ENCODE measurements at regions of chr1 and their contacts with region 1.

Region 1: DNA sequence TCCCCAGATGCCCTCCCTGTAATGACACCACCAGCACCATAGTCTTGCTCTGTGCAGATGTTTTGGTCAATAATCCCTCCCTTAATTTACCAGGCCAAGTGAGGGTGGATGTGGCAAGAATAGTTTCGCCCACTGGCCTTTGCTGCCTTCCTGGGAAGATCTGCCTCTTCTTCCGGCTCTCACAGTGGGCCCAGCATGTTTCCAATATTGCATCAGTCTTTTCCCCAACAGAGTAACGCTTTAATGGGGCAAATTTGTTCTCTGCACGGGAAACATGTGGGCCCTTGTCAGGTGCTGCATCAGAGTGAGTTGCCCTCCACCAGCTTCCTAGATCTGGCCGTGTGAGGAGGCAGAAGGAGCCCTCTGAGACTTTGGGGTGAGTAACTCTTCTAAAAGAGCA is 12.0 kb upstream of the ALX3 start:
- DNase-seq: no peak
- H3K4me3 ChIP-seq: no peak overlapping the region
- H3K27ac ChIP-seq: no peak overlapping the region
- H3K4me1 ChIP-seq: peaks cover 6% of the 10 kb centered on the region
- H3K27me3 ChIP-seq: peaks cover 60 to 62% of the 10 kb centered on the region in 2 experiments
- CTCF ChIP-seq: no peak
- POLR2A ChIP-seq: no peak

Region 2: DNA sequence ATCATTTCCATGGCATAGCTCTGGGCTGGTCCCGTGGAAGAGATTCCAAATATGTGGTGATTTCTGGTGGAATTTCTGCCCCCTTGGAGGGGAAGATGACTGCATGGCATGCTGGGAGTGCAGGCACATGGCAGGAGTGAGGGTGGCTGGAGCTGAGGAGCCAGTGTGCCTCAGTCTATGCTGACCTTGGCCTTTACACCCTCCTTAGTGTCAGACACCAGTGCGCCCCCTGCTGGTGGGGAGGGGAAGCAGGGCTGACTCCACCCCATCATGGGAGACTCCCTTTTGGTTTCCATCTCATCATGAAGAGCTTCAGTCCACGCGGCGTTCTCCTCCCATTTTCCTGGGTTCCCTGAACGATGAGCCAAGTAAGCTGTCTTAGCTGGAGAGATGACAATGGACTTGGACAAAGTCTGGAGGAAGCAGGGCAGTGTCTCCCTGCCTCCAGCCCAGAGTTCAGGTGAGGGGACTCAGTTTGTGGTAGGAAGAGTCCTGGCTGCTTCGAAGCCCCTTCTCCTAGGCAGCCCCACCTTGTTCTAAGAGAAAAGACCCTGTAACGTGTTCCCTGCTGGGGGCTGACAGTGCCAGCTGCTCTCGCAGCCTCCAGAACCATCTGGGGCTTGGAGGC is 22.3 kb before region 1 on chr1:
- CTCF ChIA-PET with region 1: interaction called, 10 read pairs
- POLR2A ChIA-PET with region 1: no interaction called
- dilution Hi-C with region 1: no loop called
- intact Hi-C with region 1: no loop called
- DNase-seq: peak; percentile 22
- H3K4me3 ChIP-seq: no peak overlapping the region
- H3K27ac ChIP-seq: no peak overlapping the region
- H3K4me1 ChIP-seq: no peaks in the 10 kb centered on the region
- H3K27me3 ChIP-seq: no peaks in the 10 kb centered on the region
- CTCF ChIP-seq: peak; percentile 72 to 92
- POLR2A ChIP-seq: no peak

Region 3: DNA sequence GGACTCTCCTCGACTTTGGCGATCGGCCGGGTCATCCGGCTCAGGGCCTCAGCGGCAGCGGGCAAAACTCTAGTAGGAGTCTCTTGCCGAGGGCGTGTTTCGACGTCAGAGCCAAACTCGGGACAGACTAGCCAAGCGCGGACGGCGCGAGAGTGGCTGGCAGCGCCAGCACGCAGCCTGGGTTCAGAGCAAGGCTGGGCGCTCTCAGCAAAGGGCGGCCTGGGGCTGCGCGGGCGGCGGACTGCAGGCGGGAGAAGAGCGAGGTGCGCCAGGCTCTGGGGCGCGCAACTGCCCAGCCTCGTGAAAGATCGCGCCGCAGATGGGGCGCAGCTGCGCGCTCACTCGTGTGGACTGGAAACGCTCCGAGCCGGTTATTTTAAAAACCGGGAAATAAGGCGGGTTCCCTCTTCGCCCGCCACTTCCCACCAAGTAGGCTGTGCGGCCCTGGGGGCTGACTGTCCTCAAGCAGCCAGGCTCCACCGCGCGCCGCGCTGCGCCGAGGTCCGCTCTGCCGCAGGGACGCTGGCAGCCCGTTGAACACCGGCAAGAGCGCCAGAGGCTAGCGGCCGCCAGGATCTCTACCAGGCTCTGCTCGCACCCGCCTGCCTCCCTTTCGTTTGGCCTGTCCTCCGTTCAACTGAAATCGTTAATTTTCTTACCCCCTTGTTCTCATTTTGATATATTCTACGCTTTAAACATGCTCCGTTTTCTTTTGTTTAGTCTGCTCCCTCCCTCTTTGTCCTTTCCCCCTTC is 14.4 kb before region 1 on chr1:
- CTCF ChIA-PET with region 1: interaction called, 23 read pairs
- POLR2A ChIA-PET with region 1: no interaction called
- dilution Hi-C with region 1: no loop called
- intact Hi-C with region 1: no loop called
- DNase-seq: peak; percentile 16
- H3K4me3 ChIP-seq: no peak overlapping the region
- H3K27ac ChIP-seq: no peak overlapping the region
- H3K4me1 ChIP-seq: no peaks in the 10 kb centered on the region
- H3K27me3 ChIP-seq: peaks cover 60 to 72% of the 10 kb centered on the region in 2 experiments
- CTCF ChIP-seq: no peak
- POLR2A ChIP-seq: no peak

Region 4: GRCh38 chr1:110106013-110106941 is 23.8 kb after region 1 on chr1:
- CTCF ChIA-PET with region 1: interaction called, 272 read pairs
- POLR2A ChIA-PET with region 1: no interaction called
- dilution Hi-C with region 1: no loop called
- intact Hi-C with region 1: no loop called
- DNase-seq: peak; percentile 65
- H3K4me3 ChIP-seq: no peak overlapping the region
- H3K27ac ChIP-seq: no peak overlapping the region
- H3K4me1 ChIP-seq: peaks cover 3% of the 10 kb centered on the region
- H3K27me3 ChIP-seq: peaks cover 0 to 3% of the 10 kb centered on the region in 2 experiments
- CTCF ChIP-seq: peak; percentile 80 to 96
- POLR2A ChIP-seq: no peak

Region 5: DNA sequence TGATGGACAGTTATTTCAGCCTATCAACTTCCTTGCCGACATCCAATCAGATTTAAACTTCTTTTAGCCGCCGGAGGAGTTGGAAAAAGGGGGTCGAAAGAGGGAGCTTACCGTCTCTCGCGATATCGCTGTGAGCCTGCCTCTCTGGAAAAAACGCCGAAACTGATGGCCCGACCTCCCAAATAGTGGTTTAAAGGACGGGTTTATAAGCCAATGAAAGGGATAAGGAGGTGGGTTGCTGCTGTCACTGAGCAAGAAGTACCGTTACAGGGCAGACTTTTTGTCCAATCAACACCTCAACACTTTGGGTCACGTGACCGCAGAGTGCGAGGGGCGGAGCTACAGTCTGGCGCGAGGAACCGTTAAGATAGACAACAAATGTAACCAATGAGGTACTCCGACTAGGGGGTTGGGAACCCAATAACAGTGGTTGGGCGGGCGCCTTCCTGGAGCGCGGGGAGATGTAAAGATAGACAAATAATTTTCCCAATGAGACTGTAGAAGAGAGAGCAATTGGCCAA is 256.5 kb after region 1 on chr1 and contains the start of gene RBM15:
- CTCF ChIA-PET with region 1: no interaction called
- POLR2A ChIA-PET with region 1: no interaction called
- dilution Hi-C with region 1: no loop called
- intact Hi-C with region 1: no loop called
- DNase-seq: peak; percentile 100
- H3K4me3 ChIP-seq: peak within 1 kb of the TSS; percentile 83 to 91 (median 84)
- H3K27ac ChIP-seq: peak within 1 kb of the TSS; percentile 88
- H3K4me1 ChIP-seq: peaks cover 37% of the 10 kb centered on the region
- H3K27me3 ChIP-seq: no peaks in the 10 kb centered on the region
- CTCF ChIP-seq: no peak
- POLR2A ChIP-seq: no peak
- total RNA-seq, gene RBM15: 26.9 and 29.5 TPM in 2 replicates